Mammary epithelial cell (primary cell): ENCODE measurements at regions of chr15 and their contacts with region 1.

Region 1: GRCh38 chr15:83380682-83381081 is 66.5 kb upstream of the SH3GL3 start:
- DNase-seq: peak; percentile 84
- H3K4me3 ChIP-seq: no peak overlapping the region
- H3K27ac ChIP-seq: peak overlapping the region; percentile 97
- H3K4me1 ChIP-seq: peaks cover 45% of the 10 kb centered on the region
- H3K27me3 ChIP-seq: no peaks in the 10 kb centered on the region
- CTCF ChIP-seq: peak; percentile 43 to 75

Region 2: GRCh38 chr15:83323296-83323711 is 57.4 kb before region 1 on chr15:
- CTCF ChIA-PET with region 1: no interaction called
- dilution Hi-C with region 1: loop called (anchors 5 kb)
- in situ Hi-C with region 1: no loop called
- intact Hi-C with region 1: loop called (anchors 1 kb)
- DNase-seq: peak; percentile 60
- H3K4me3 ChIP-seq: no peak overlapping the region
- H3K27ac ChIP-seq: peak overlapping the region; percentile 50
- H3K4me1 ChIP-seq: peaks cover 52% of the 10 kb centered on the region
- H3K27me3 ChIP-seq: no peaks in the 10 kb centered on the region
- CTCF ChIP-seq: no peak

Region 3: DNA sequence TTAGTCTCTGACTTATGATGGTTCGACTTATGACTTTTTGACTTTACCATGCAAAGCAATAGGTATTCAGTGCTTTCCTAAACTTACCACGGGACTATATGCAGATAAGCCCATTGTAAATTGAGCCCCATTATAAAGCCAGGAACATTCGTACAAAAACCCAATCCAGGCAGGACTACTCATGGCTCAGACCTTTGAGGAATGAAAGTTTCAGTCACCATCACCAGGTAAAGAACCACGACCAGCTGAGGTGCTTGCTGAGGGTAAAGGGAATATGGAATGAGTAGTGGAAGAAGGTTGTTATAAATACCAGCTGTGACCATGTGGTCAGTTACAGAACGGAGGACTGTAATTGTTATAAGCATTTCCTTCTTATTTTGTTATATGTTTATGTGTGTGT is 41.3 kb before region 1 on chr15:
- CTCF ChIA-PET with region 1: no interaction called
- dilution Hi-C with region 1: no loop called
- in situ Hi-C with region 1: no loop called
- intact Hi-C with region 1: no loop called
- DNase-seq: peak; percentile 18
- H3K4me3 ChIP-seq: no peak overlapping the region
- H3K27ac ChIP-seq: no peak overlapping the region
- H3K4me1 ChIP-seq: no peaks in the 10 kb centered on the region
- H3K27me3 ChIP-seq: no peaks in the 10 kb centered on the region
- CTCF ChIP-seq: no peak

Region 4: DNA sequence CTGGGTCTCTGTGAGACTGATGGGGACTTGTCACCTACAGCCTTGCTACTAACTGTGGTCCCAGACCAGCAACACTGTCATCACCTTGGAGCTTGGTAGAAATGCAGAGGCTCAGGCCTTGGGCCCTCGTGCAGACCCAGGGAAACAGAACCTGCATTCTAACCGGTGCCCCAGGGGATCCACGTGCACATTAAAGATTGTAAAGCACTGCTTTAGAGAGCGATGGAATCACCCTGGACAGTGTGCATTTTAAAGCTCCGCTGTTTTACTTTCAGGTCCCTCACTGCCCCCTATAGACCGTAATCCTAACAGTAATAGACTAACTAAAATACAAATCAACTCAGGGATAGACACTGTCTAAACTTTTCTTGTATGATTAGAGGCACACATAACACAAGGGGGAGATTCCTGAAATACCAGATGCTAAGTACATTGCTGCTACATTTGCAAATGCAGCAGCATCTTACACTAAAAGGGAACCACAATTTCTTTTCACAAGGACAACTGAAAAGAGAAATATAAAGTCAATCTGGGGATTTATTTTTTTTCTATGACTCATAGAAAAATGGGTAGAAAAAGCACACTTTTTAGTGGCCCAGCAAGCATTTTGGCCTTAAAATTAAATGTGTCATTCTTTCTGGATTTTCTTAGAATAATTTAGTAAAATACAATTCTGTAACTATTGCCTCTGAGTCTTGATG is 55.9 kb after region 1 on chr15:
- CTCF ChIA-PET with region 1: no interaction called
- dilution Hi-C with region 1: no loop called
- in situ Hi-C with region 1: no loop called
- intact Hi-C with region 1: loop called (anchors 2 kb)
- DNase-seq: peak; percentile 61
- H3K4me3 ChIP-seq: no peak overlapping the region
- H3K27ac ChIP-seq: no peak overlapping the region
- H3K4me1 ChIP-seq: no peaks in the 10 kb centered on the region
- H3K27me3 ChIP-seq: no peaks in the 10 kb centered on the region
- CTCF ChIP-seq: peak; percentile 64 to 70